ENCODE measurements at regions of chr1 and their contacts with region 1.

Region 1: DNA sequence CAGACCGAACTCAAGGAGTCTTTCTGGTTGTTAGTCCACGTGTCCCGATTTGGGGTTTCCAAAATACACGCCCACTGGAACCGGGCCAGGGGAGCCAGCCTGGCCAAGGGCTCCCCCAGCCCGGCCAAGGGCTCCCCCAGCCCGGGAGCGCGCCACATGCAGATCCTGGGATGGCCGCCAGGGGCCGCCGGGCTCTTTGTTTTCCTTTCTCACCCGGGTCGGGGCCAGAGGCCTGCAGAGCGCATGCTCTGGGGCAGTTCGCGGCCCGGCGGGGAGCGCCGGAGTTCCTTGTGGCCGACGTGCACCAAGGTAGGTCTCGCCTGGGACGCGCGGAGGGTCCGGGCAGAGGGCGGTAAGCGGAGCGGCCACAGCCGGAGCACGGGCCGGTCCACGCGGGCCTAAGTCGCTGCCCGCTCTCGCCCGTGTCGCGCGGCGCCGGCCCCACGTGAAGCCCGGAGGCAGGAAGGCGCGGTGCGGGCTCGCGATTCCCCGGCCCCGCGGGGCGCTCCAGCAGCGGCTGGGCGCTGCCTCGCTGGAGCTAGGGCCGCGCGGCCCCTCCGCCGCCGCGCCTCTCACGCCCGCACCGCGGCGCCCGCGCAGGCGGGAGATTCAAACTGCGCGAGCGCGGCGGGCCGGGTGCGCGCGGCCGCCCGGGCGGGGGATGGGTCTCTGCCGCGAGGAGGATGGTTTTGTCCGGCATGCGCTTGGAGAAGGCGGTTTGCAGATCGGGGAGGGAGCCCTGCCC is 12.3 kb downstream of the RCC1 start:
- H3K4me3 ChIP-seq: peak overlapping the region; percentile 71
- H3K27ac ChIP-seq: peak overlapping the region; percentile 94
- H3K4me1 ChIP-seq: no peaks in the 10 kb centered on the region
- CTCF ChIP-seq: peak; percentile 93

Region 2: GRCh38 chr1:28296401-28297261 is 221.5 kb before region 1 on chr1:
- CTCF ChIA-PET with region 1: no interaction called
- POLR2A ChIA-PET with region 1: no interaction called
- H3K4me3 ChIP-seq: peak overlapping the region; percentile 16
- H3K27ac ChIP-seq: peak overlapping the region; percentile 21; the same call in 1 of the 2 replicates
- H3K4me1 ChIP-seq: peaks cover 10% of the 10 kb centered on the region
- CTCF ChIP-seq: no peak

Region 3: DNA sequence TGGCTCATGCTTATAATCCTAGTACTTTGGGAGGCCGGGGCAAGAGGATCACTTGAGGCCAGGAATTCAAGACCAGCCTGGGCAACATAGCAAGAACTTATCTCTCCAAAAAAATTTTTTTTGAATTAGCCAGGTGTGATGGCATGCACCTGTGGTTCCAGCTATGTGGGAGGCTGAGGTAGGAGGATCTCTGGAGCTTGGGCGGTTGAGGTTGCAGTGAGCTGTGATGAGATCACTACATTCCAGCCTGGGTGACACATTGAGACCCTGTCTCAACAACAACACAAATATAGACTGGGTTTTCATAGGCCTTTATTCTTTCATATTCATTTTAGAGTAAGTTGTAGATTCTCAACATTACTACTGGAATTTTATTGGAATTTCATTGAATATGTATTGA is 176.6 kb before region 1 on chr1:
- CTCF ChIA-PET with region 1: no interaction called
- POLR2A ChIA-PET with region 1: no interaction called
- H3K4me3 ChIP-seq: no peak overlapping the region
- H3K27ac ChIP-seq: no peak overlapping the region
- H3K4me1 ChIP-seq: no peaks in the 10 kb centered on the region
- CTCF ChIP-seq: no peak

Region 4: GRCh38 chr1:28456078-28456477 is 62.1 kb before region 1 on chr1:
- CTCF ChIA-PET with region 1: no interaction called
- POLR2A ChIA-PET with region 1: no interaction called
- H3K4me3 ChIP-seq: no peak overlapping the region
- H3K27ac ChIP-seq: no peak overlapping the region
- H3K4me1 ChIP-seq: no peaks in the 10 kb centered on the region
- CTCF ChIP-seq: no peak

Region 5: DNA sequence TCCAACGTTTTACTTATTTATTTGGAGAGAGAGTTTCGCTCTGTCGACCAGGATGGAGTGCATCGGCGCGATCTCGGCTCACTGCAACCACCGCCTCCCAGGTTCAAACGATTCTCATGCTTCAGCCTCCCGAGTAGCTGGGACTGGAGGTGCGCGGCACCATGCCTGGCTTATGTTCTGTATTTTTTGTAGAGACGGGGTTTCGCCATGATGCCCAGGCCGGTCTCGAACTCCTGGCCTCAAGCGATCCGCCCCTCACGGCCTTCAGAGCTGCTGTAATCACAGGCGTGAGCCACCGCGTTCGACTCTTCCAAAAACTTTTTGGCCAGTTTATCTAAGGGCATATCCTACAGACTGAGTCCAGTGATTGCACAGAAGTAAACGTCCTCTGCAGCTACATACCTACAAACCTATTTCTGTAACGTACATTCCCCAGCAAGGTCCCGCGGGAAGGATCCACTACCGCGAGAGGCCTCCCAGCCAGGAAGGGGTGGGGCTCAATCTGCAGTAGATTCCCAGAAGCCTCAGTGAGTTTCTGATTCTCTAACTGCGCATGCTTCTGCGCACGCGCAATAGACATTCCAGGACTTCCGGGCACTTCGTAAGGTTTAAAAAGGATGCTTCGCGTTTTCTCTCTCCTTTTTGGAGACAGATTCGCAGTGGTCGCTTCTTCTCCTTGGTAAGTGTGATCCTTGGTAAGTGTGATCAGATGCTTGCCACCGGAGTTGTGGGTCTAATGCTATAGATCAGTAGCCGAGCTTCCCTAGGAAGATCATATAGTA is 12.6 kb before region 1 on chr1 and contains the start of gene RCC1:
- CTCF ChIA-PET with region 1: interaction called, 4 read pairs
- POLR2A ChIA-PET with region 1: interaction called, 34 read pairs
- H3K4me3 ChIP-seq: peak within 1 kb of the TSS; percentile 79
- H3K27ac ChIP-seq: peak within 1 kb of the TSS; percentile 86
- H3K4me1 ChIP-seq: no peaks in the 10 kb centered on the region; the same call in 1 of the 2 replicates
- CTCF ChIP-seq: no peak